ENCODE measurements at regions of chr5 and their contacts with region 1.

Region 1: DNA sequence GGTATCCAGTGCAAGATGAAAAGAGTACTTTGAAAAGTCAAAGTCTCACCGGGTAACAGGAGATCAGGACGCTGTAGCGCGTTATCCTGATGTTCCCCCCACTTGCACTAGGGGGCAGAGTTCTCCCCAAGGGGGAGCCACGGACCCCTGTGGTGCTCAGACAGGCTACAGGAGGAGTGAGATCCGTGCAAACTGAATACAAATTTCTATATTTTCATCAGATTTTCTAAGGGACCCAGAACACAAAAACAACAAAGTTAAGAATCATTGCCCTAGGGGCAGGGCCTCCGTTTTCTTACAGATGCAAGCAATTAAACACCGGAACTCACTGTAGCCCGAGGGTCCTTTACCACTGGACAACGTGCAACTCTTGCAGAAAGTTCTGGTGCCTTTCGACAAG is 2.0 kb downstream of the MYO10 start:
- DNase-seq: peak; percentile 86
- H3K4me3 ChIP-seq: peak overlapping the region; percentile 83 to 99 (median 97)
- H3K27ac ChIP-seq: peak overlapping the region; percentile 81
- H3K4me1 ChIP-seq: peaks cover 48% of the 10 kb centered on the region
- H3K27me3 ChIP-seq: no peaks in the 10 kb centered on the region
- CTCF ChIP-seq: peak; percentile 90 to 99
- POLR2A ChIP-seq: no peak

Region 2: GRCh38 chr5:16364910-16365309 is 569.2 kb before region 1 on chr5:
- CTCF ChIA-PET with region 1: no interaction called
- POLR2A ChIA-PET with region 1: no interaction called
- dilution Hi-C with region 1: no loop called
- intact Hi-C with region 1: no loop called
- DNase-seq: no peak
- H3K4me3 ChIP-seq: no peak overlapping the region
- H3K27ac ChIP-seq: no peak overlapping the region
- H3K4me1 ChIP-seq: no peaks in the 10 kb centered on the region
- H3K27me3 ChIP-seq: no peaks in the 10 kb centered on the region
- CTCF ChIP-seq: no peak
- POLR2A ChIP-seq: no peak

Region 3: DNA sequence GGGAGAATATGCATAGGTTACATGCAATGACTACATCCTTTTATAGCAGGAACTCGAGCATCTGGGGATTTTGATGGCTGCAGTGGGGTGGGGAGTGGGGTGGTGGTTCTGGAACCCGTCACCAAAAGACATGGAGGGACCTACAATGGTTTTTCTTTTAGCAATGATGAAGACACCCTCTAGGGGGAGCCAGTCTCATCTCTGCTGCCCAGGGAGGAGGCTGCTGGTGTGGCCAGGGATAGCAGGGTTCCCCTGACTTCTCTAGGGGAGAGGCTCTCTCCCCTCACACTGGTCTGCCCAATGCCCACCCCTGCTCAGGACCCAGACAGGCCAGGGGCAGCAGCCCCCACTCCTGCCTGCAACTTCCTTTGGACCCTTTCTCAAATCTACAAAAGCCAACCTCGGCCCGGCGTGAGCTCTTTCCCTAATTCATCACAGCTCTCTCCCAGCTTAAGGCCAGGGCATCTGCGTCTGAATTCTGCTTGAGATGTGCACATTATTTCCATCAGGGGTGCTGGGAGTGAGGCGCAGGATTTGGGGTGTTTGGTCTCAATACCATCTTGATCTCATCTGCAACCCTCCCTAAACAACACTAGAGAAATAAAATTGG is 243.8 kb before region 1 on chr5:
- CTCF ChIA-PET with region 1: no interaction called
- POLR2A ChIA-PET with region 1: no interaction called
- dilution Hi-C with region 1: no loop called
- intact Hi-C with region 1: loop called (anchors 10 kb)
- DNase-seq: peak; percentile 55
- H3K4me3 ChIP-seq: no peak overlapping the region
- H3K27ac ChIP-seq: no peak overlapping the region
- H3K4me1 ChIP-seq: no peaks in the 10 kb centered on the region
- H3K27me3 ChIP-seq: no peaks in the 10 kb centered on the region
- CTCF ChIP-seq: peak; percentile 63 to 82
- POLR2A ChIP-seq: no peak

Region 4: GRCh38 chr5:16916262-16916865 is 17.8 kb before region 1 on chr5:
- CTCF ChIA-PET with region 1: interaction called, 14 read pairs
- POLR2A ChIA-PET with region 1: no interaction called
- dilution Hi-C with region 1: no loop called
- intact Hi-C with region 1: loop called (anchors 1 kb)
- DNase-seq: peak; percentile 93
- H3K4me3 ChIP-seq: no peak overlapping the region
- H3K27ac ChIP-seq: peak overlapping the region; percentile 54
- H3K4me1 ChIP-seq: peaks cover 57% of the 10 kb centered on the region
- H3K27me3 ChIP-seq: no peaks in the 10 kb centered on the region
- CTCF ChIP-seq: no peak
- POLR2A ChIP-seq: no peak

Region 5: DNA sequence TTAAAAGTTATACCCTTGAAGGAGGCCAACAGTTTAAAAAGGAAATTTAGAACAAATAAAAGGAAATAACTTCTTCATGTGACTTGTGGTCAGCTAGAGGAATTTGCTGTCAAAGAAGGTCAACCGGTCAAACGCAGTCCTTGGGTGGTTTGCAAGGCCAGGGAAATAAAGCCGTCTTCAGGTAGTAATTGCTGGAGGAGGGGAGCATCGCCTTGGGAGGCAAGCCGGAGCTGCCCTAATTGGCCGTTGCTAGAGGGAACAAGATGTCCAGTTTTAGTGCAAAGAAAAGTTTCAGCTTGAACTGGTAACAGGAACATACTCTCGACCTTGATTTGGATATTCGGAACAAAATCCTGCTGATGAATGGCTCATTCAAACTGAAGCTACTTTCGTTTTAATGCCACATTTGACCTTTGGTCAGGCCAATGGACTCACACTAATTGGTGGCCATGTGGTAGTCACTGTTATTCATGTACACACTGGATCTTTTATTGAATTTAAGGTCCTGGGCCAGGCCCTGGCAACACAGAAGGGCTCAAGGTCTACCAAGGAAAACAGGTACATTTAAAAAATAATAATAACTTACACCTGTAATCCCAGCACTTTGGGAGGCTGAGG is 49.0 kb after region 1 on chr5:
- CTCF ChIA-PET with region 1: interaction called, 3 read pairs
- POLR2A ChIA-PET with region 1: no interaction called
- dilution Hi-C with region 1: no loop called
- intact Hi-C with region 1: loop called (anchors 2 kb)
- DNase-seq: peak; percentile 75
- H3K4me3 ChIP-seq: no peak overlapping the region
- H3K27ac ChIP-seq: no peak overlapping the region
- H3K4me1 ChIP-seq: peaks cover 15% of the 10 kb centered on the region
- H3K27me3 ChIP-seq: no peaks in the 10 kb centered on the region
- CTCF ChIP-seq: no peak
- POLR2A ChIP-seq: no peak

Region 6: DNA sequence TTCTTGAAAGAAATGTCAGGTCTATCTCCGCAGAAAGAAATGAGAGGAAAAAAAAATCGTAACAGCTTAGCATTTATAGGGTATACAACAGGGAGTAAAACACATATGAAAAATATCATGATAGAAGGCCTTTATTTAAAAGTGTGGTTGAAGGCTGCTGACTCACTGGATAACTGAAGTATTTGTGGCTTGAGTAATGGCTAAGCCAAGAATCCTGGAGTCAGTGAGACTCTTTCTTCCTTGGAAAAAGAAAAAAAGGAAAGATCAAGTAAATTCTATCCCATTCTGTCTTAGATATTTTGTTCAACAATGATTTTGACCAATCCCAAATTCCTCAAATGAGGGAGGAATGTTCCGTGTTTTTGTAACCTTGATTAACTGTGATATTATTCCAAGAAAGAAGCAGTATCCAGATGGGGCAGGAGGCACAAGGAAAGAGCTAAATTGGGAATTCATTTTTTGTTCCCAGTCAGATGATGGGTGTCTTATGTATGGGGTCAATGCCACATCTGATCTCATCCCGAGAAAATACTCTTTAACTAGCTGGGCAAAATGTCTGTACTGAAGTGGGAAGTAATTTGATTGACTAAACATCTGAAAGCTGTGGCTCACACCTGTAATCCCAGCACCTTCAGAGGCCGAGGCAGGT is 66.3 kb after region 1 on chr5:
- CTCF ChIA-PET with region 1: interaction called, 15 read pairs
- POLR2A ChIA-PET with region 1: interaction called, 5 read pairs
- dilution Hi-C with region 1: no loop called
- intact Hi-C with region 1: loop called (anchors 1 kb)
- DNase-seq: peak; percentile 77
- H3K4me3 ChIP-seq: no peak overlapping the region
- H3K27ac ChIP-seq: peak overlapping the region; percentile 97
- H3K4me1 ChIP-seq: peaks cover 32% of the 10 kb centered on the region
- H3K27me3 ChIP-seq: no peaks in the 10 kb centered on the region
- CTCF ChIP-seq: no peak
- POLR2A ChIP-seq: no peak

Region 7: GRCh38 chr5:17081142-17081541 is 147.0 kb after region 1 on chr5:
- CTCF ChIA-PET with region 1: interaction called, 23 read pairs
- POLR2A ChIA-PET with region 1: no interaction called
- dilution Hi-C with region 1: no loop called
- intact Hi-C with region 1: loop called (anchors 1 kb)
- DNase-seq: no peak
- H3K4me3 ChIP-seq: no peak overlapping the region
- H3K27ac ChIP-seq: peak overlapping the region; percentile 80
- H3K4me1 ChIP-seq: peaks cover 39% of the 10 kb centered on the region
- H3K27me3 ChIP-seq: no peaks in the 10 kb centered on the region
- CTCF ChIP-seq: no peak
- POLR2A ChIP-seq: no peak

Region 8: GRCh38 chr5:17157916-17158529 is 223.9 kb after region 1 on chr5:
- CTCF ChIA-PET with region 1: interaction called, 11 read pairs
- POLR2A ChIA-PET with region 1: interaction called, 5 read pairs
- dilution Hi-C with region 1: no loop called
- intact Hi-C with region 1: no loop called
- DNase-seq: peak; percentile 69
- H3K4me3 ChIP-seq: no peak overlapping the region
- H3K27ac ChIP-seq: no peak overlapping the region
- H3K4me1 ChIP-seq: peaks cover 18% of the 10 kb centered on the region
- H3K27me3 ChIP-seq: no peaks in the 10 kb centered on the region
- CTCF ChIP-seq: no peak
- POLR2A ChIP-seq: no peak